ENCODE measurements at regions of chr5 and their contacts with region 1.

Region 1: DNA sequence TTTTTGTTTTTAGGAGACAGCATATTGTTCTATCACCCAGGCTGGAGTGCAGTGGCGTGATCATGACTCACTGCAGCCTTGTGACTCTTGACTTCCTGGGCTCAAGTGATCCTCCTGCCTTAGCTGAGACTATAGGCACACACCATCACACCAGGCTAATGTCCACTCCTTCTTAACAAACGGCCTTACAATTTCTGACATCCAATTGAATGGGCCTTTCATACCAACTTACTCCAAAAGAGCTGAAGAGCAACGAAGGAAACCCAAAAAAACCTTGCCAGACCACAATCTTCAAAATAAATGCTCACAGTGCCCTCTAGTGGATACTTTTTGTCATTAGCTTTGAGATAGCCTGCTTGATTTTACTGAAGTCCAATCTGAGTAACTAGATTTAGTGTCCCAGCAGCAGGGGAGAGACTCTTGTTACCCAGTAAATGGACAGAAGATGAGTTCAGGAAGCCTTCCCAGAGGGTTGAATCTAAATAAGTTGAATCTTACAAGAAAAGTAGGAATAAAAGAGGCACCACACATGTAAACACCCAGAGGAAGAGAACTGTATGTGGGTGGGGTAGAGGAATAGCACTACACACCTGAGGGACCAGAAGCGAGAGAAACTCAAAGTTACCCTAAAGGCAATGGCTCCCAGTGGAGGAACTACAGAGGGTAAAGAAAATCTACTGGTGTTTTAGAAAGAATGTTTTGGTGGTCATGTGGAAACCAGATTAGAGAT is 9.3 kb downstream of the ZNF622 start:
- DNase-seq: peak; percentile 60
- H3K4me3 Mint-ChIP-seq: no peak overlapping the region
- H3K27ac Mint-ChIP-seq: peak overlapping the region; percentile 76
- H3K4me1 Mint-ChIP-seq: peaks cover 57% of the 10 kb centered on the region
- H3K27me3 Mint-ChIP-seq: no peaks in the 10 kb centered on the region

Region 2: GRCh38 chr5:16160706-16161105 is 295.6 kb before region 1 on chr5:
- CTCF ChIA-PET with region 1: interaction called, 42 read pairs
- POLR2A ChIA-PET with region 1: no interaction called
- intact Hi-C with region 1: loop called (anchors 1 kb)
- DNase-seq: peak; percentile 17
- H3K4me3 Mint-ChIP-seq: no peak overlapping the region
- H3K27ac Mint-ChIP-seq: no peak overlapping the region
- H3K4me1 Mint-ChIP-seq: no peaks in the 10 kb centered on the region
- H3K27me3 Mint-ChIP-seq: no peaks in the 10 kb centered on the region

Region 3: DNA sequence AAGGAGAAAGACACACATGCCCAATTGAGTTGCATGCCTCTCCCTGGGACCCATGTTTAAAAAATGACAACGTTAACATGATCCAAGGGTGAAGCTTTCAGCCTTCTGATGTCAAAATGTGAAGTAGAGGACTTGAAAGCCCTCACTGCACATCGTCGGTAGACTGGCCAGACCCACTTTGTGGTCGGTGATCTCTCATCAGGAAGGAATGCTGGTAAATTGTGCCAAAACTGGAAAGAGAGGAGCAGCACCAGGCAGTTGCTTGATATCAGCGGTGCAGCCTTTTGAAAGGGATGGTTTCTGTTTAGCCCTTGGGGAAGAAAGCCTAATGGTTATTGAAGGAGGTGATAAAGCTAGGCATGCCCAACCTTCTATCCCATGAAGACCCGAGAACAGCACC is 151.4 kb before region 1 on chr5:
- CTCF ChIA-PET with region 1: no interaction called
- POLR2A ChIA-PET with region 1: no interaction called
- intact Hi-C with region 1: no loop called
- DNase-seq: no peak
- H3K4me3 Mint-ChIP-seq: no peak overlapping the region
- H3K27ac Mint-ChIP-seq: no peak overlapping the region
- H3K4me1 Mint-ChIP-seq: no peaks in the 10 kb centered on the region
- H3K27me3 Mint-ChIP-seq: no peaks in the 10 kb centered on the region

Region 4: GRCh38 chr5:16471387-16471786 is 15.1 kb after region 1 on chr5:
- CTCF ChIA-PET with region 1: interaction called, 38 read pairs
- POLR2A ChIA-PET with region 1: interaction called, 8 read pairs
- intact Hi-C with region 1: loop called (anchors 1 kb)
- DNase-seq: no peak
- H3K4me3 Mint-ChIP-seq: no peak overlapping the region
- H3K27ac Mint-ChIP-seq: no peak overlapping the region
- H3K4me1 Mint-ChIP-seq: peaks cover 29% of the 10 kb centered on the region
- H3K27me3 Mint-ChIP-seq: no peaks in the 10 kb centered on the region

Region 5: GRCh38 chr5:16492391-16493175 is 36.3 kb after region 1 on chr5:
- CTCF ChIA-PET with region 1: no interaction called
- POLR2A ChIA-PET with region 1: no interaction called
- intact Hi-C with region 1: no loop called
- DNase-seq: no peak
- H3K4me3 Mint-ChIP-seq: no peak overlapping the region
- H3K27ac Mint-ChIP-seq: no peak overlapping the region
- H3K4me1 Mint-ChIP-seq: peaks cover 5% of the 10 kb centered on the region
- H3K27me3 Mint-ChIP-seq: no peaks in the 10 kb centered on the region

Region 6: GRCh38 chr5:17012302-17012701 is 556.0 kb after region 1 on chr5:
- CTCF ChIA-PET with region 1: no interaction called
- POLR2A ChIA-PET with region 1: no interaction called
- intact Hi-C with region 1: no loop called
- DNase-seq: no peak
- H3K4me3 Mint-ChIP-seq: no peak overlapping the region
- H3K27ac Mint-ChIP-seq: no peak overlapping the region
- H3K4me1 Mint-ChIP-seq: no peaks in the 10 kb centered on the region
- H3K27me3 Mint-ChIP-seq: no peaks in the 10 kb centered on the region

Measured in activated CD4-positive, alpha-beta memory T cell treated with anti-CD3 and anti-CD28 coated beads for 36 hours (primary cell).